ENCODE measurements at regions of chr7 and their contacts with region 1.

Region 1: DNA sequence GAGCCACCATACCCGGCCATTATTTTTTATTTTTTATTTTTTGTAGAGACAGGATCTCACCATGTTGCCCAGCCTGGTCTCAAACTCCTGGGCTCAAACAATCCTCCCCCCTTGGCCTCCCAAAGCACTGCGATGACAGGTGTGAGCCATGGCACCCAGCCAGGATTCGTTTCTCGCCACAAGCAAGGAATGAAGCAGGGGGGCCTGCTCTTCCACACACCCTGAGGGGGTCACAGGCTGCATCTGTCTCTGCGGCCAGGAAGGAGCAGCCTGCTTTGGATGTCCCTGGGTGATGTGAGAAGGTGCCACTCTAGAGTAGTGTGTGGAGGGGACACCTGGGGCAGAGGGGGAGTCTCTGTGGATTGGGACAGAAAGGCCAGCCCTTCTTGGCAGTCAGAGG is 61.3 kb upstream of the TNRC18 start:
- DNase-seq: no peak
- ATAC-seq: no peak
- H3K4me3 ChIP-seq: no peak overlapping the region
- H3K27ac ChIP-seq: no peak overlapping the region
- H3K4me1 ChIP-seq: peaks cover 10% of the 10 kb centered on the region
- H3K27me3 ChIP-seq: no peaks in the 10 kb centered on the region
- CTCF ChIP-seq: no peak

Region 2: DNA sequence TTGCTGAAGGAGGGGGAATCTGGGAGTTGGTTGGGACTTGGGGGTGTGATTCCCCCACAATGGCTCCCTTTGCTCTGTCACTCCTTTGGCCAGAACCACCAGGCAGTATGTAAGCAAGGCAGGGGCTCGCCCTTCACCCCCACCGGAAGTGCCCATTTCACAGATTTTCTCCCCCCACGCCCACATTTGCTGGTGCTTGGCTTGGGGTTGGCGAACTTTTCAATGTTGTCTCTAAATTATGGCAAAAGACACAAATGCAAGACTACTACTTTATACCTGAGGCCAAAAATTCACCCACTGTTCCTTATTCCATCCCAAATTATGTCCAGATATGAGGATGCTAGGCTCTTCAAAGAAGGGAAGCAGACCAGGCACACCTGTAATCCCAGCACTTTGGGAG is 414.7 kb before region 1 on chr7:
- CTCF ChIA-PET with region 1: no interaction called
- POLR2A ChIA-PET with region 1: no interaction called
- in situ Hi-C with region 1: no loop called
- intact Hi-C with region 1: no loop called
- DNase-seq: no peak
- ATAC-seq: no peak
- H3K4me3 ChIP-seq: no peak overlapping the region
- H3K27ac ChIP-seq: no peak overlapping the region
- H3K4me1 ChIP-seq: no peaks in the 10 kb centered on the region
- H3K27me3 ChIP-seq: no peaks in the 10 kb centered on the region
- CTCF ChIP-seq: no peak

Region 3: GRCh38 chr7:5404421-5404826 is 80.5 kb before region 1 on chr7:
- CTCF ChIA-PET with region 1: interaction called, 4 read pairs
- POLR2A ChIA-PET with region 1: interaction called, 11 read pairs
- in situ Hi-C with region 1: no loop called
- intact Hi-C with region 1: no loop called
- DNase-seq: no peak
- ATAC-seq: no peak
- H3K4me3 ChIP-seq: no peak overlapping the region
- H3K27ac ChIP-seq: no peak overlapping the region
- H3K4me1 ChIP-seq: peaks cover 13% of the 10 kb centered on the region
- H3K27me3 ChIP-seq: no peaks in the 10 kb centered on the region
- CTCF ChIP-seq: no peak